CD4-positive, alpha-beta memory T cell (primary cell): ENCODE measurements at regions of chr12 and their contacts with region 1.

Region 1: GRCh38 chr12:123120452-123121166 is 30.3 kb downstream of the PITPNM2 start:
- DNase-seq: peak in 2 of 5 donors; percentile 21 to 26
- H3K4me3 ChIP-seq: no peak overlapping the region
- H3K4me3 Mint-ChIP-seq: peak overlapping the region in 7 of 8 donors; percentile 33 to 66 (median 58)
- H3K27ac ChIP-seq: peak overlapping the region; percentile 27
- H3K27ac Mint-ChIP-seq: peak overlapping the region; percentile 82 to 89 (median 86)
- H3K4me1 ChIP-seq: peaks cover 53% of the 10 kb centered on the region
- H3K4me1 Mint-ChIP-seq: peaks cover 23 to 49% (median 38%) of the 10 kb centered on the region in 4 donors
- H3K27me3 ChIP-seq: no peaks in the 10 kb centered on the region
- H3K27me3 Mint-ChIP-seq: no peaks in the 10 kb centered on the region

Region 2: GRCh38 chr12:123106628-123107359 is 13.8 kb before region 1 on chr12:
- CTCF ChIA-PET with region 1: interaction called, 8 read pairs
- POLR2A ChIA-PET with region 1: interaction called, 24 read pairs
- intact Hi-C with region 1: no loop called
- DNase-seq: peak; percentile 37 to 64 (median 48)
- H3K4me3 ChIP-seq: peak overlapping the region in 1 of 2 donors; percentile 14
- H3K4me3 Mint-ChIP-seq: peak overlapping the region; percentile 67 to 83 (median 75)
- H3K27ac ChIP-seq: peak overlapping the region; percentile 54
- H3K27ac Mint-ChIP-seq: peak overlapping the region; percentile 82 to 96 (median 95)
- H3K4me1 ChIP-seq: peaks cover 33% of the 10 kb centered on the region
- H3K4me1 Mint-ChIP-seq: peaks cover 31 to 54% (median 39%) of the 10 kb centered on the region in 4 donors
- H3K27me3 ChIP-seq: no peaks in the 10 kb centered on the region
- H3K27me3 Mint-ChIP-seq: no peaks in the 10 kb centered on the region

Region 3: DNA sequence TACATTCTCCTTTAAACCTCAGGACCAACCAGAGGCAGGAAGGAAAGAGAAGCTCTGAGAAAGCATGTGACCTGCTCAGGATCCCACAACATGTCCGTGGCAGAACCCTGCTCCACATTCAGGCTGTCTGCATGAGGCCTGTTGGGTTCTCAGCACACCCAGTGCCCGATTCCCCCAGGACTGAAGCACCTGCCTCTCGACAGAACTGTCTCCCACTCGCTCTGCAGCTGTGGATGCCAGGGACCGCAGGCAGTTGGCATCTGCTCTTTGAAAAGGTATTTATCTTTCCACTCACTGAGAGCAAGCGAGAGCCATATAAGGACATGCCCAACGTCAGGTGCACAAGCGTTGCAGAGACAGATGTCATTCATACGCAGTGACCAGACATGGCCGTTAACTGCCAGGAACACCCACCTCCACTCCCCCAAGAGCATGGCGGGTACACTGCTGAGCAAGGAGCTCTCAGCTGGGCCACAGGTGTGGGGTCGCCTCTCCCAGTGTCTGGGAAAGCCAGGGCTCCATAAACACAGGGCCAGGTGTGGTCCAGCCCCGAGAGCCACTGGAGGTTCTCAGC is 11.4 kb after region 1 on chr12:
- CTCF ChIA-PET with region 1: interaction called, 7 read pairs
- POLR2A ChIA-PET with region 1: interaction called, 13 read pairs
- intact Hi-C with region 1: loop called (anchors 1 kb)
- DNase-seq: peak; percentile 42 to 63 (median 50)
- H3K4me3 ChIP-seq: peak overlapping the region; percentile 22 to 26
- H3K4me3 Mint-ChIP-seq: peak overlapping the region; percentile 55 to 82 (median 67)
- H3K27ac ChIP-seq: peak overlapping the region; percentile 48
- H3K27ac Mint-ChIP-seq: peak overlapping the region; percentile 86 to 95 (median 92)
- H3K4me1 ChIP-seq: peaks cover 18% of the 10 kb centered on the region
- H3K4me1 Mint-ChIP-seq: peaks cover 20 to 39% (median 27%) of the 10 kb centered on the region in 4 donors
- H3K27me3 ChIP-seq: no peaks in the 10 kb centered on the region
- H3K27me3 Mint-ChIP-seq: no peaks in the 10 kb centered on the region